Sigmoid colon (tissue), 7 donors: ENCODE measurements at regions of chr5 and their contacts with region 1.

Region 1: DNA sequence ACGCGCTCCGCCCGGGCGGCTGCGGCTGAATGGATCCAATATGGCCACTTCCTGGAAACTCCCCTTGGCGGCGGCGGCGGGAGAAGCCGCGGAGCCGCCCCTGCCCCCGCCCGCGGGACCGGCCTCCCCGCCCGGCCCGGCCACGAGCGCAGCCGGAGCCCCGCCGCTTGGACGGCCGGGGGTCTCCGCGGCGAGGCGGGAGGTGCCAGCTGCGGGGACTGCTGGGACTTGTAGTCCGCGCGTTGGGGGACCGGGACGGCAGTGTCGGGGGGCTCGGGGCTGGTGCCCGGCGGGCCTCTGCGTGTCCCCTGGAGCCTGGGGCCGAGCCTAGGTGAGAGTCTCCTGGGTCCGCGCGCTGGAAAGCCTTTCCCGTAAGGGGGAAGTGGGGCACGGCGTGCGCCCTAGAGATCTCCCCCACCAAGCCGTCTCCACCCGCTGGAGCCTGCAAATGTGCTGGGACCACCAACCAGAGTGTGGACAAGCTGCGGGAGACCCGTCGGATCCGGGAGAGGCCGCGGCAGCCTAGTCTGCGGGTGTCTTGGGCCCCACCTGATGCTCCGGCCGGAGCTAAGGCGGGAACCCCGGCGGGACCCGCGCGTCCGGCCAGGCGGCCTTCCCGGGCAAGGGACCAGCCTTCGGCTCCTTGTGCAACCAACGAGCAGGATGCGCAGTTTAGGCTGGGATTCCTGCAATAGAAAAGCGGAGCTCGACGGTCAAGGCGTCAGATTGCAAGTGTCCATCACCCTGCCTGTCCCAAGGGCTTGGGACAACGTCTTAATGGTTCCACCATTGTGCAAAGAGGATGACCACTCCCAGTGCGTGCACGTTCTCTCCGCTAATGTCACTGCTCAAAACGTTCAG is at the start of gene SEPTIN8:
- DNase-seq: peak; percentile 82
- H3K4me3 ChIP-seq: peak within 1 kb of the TSS; percentile 68 to 79 (median 74)
- H3K27ac ChIP-seq: peak within 1 kb of the TSS; percentile 75 to 82 (median 78)
- H3K4me1 ChIP-seq: peaks cover 0 to 39% (median 29%) of the 10 kb centered on the region in 4 donors
- H3K27me3 ChIP-seq: no peaks in the 10 kb centered on the region
- CTCF ChIP-seq: no peak
- EP300 ChIP-seq: no peak
- POLR2A ChIP-seq: no peak
- total RNA-seq, gene SEPTIN8: 21.4 to 36.0 (median 30.9) TPM

Region 2: DNA sequence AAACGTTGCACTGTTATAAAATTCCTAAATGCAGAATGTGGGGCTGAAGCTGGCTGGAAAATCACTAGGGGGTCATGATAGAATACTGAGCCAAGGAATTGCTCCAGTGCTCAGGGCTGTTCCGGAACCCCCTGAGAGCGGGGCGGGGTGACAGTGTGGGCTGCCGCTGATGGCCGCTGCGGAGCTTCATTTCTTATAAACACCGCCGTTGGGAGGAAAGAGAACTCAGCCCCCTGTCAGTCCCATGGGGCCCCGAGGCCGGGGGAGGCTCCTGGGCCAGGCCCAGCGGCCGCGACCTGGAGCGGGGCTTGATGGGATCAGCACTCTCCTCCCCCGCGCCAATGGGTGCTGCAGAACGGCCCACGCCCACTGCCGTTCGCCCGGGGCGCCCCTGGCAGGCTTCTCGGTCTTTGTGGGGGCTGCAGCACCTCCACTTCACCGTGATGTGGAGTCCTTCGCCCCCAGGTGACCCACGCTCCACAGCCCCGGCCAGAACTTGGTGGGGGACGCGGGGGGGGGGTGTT is 281.7 kb before region 1 on chr5:
- intact Hi-C with region 1: loop called (anchors 5 kb)
- DNase-seq: peak; percentile 94
- H3K4me3 ChIP-seq: peak overlapping the region; percentile 55 to 76 (median 62)
- H3K27ac ChIP-seq: peak overlapping the region; percentile 93 to 100 (median 98)
- H3K4me1 ChIP-seq: peaks cover 0 to 54% (median 44%) of the 10 kb centered on the region in 4 donors
- H3K27me3 ChIP-seq: no peaks in the 10 kb centered on the region
- CTCF ChIP-seq: no peak
- EP300 ChIP-seq: peak in 3 of 4 donors; percentile 3 to 32 (median 23)
- POLR2A ChIP-seq: peak in 1 of 2 donors; percentile 4

Region 3: DNA sequence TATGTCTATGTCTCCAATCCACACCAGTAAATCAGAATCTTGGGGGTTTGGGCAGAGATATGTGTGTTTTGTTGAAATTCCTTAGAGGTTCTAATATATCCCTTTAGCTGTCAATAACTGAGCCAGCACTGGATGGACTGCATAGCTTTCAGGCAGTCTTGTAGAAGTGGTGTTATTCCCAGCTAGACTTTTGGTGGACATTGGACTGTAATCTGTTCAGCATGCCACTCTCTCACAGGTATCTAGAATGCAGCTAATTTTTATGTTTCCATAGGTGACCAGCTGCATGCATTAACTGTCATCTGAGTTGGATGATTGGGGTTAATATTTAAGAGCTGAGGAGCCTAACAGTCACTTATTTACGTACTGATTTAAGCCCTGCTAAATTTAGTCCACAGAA is 164.6 kb before region 1 on chr5:
- intact Hi-C with region 1: no loop called
- DNase-seq: no peak
- H3K4me3 ChIP-seq: no peak overlapping the region
- H3K27ac ChIP-seq: no peak overlapping the region
- H3K4me1 ChIP-seq: no peaks in the 10 kb centered on the region
- H3K27me3 ChIP-seq: no peaks in the 10 kb centered on the region
- CTCF ChIP-seq: no peak
- EP300 ChIP-seq: no peak
- POLR2A ChIP-seq: no peak

Region 4: DNA sequence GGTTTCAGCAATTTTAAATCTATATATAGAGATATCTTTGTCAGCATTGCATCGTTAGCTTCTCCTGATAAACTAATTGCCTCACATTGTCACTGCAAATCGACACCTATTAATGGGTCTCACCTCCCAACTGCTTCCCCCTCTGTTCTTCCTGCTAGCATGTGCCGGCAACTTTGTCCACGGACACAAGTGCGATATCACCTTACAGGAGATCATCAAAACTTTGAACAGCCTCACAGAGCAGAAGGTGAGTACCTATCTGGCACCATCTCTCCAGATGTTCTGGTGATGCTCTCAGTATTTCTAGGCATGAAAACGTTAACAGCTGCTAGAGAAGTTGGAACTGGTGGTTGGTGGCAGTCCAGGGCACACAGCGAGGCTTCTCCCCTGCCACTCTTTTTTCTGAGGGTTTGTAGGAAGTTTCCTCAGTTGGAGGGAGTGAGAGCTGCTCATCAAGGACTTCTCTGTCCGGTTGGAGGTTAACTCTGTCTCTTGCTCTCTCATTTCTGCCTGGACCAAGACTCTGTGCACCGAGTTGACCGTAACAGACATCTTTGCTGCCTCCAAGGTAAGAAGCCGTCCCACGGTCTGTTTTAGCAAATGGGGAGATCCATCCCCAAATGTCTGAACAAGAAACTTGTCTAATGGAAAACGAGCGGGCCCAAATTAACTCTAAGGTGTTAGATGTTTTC is 103.4 kb before region 1 on chr5 and contains the start of gene IL4:
- intact Hi-C with region 1: no loop called
- DNase-seq: no peak
- H3K4me3 ChIP-seq: no peak within 1 kb of the TSS
- H3K27ac ChIP-seq: peak within 1 kb of the TSS; percentile 49 to 80 (median 72)
- H3K4me1 ChIP-seq: peaks cover 0 to 28% (median 24%) of the 10 kb centered on the region in 4 donors
- H3K27me3 ChIP-seq: no peaks in the 10 kb centered on the region
- CTCF ChIP-seq: no peak
- EP300 ChIP-seq: no peak
- POLR2A ChIP-seq: no peak
- total RNA-seq, gene IL4: not detected

Region 5: GRCh38 chr5:132736853-132737833 is 40.3 kb before region 1 on chr5 and contains the start of gene KIF3A:
- intact Hi-C with region 1: loop called (anchors 2 kb)
- DNase-seq: peak; percentile 98
- H3K4me3 ChIP-seq: peak within 1 kb of the TSS; percentile 77 to 94 (median 81)
- H3K27ac ChIP-seq: peak within 1 kb of the TSS; percentile 74 to 85 (median 80)
- H3K4me1 ChIP-seq: peaks cover 0 to 19% (median 10%) of the 10 kb centered on the region in 4 donors
- H3K27me3 ChIP-seq: no peaks in the 10 kb centered on the region
- CTCF ChIP-seq: peak in 2 of 4 experiments; percentile 14 to 30
- EP300 ChIP-seq: no peak
- POLR2A ChIP-seq: no peak
- total RNA-seq, gene KIF3A: 7.1 to 19.9 (median 12.9) TPM

Region 6: DNA sequence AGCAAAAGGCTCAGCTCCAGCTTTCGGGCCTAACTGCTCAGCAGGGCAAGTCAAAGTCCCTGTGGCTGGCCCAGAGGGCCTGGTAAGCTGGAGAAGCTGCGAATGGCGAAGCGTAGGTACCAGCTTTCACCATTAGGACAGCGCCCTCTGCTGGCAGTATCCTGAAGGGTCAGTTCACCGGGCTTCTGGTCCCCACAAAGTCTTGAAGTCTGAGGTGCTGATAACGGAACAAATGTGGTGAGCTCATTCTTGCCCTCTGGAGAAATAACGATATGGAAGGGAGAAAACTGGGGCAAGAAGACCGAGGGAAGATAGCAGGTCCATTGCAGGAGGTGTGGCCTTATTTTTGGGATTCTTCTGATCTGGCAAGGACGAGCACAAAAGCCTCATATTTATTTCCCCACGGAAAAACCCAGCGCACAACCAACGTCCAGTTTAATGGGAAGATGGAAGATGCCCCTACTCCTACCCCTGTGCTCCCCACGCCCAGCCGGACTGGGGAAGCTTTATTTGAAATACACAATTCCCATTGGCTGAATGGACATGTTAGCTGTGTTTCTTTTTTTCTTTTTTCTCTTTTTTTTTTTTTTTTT is 42.8 kb after region 1 on chr5:
- intact Hi-C with region 1: loop called (anchors 5 kb)
- DNase-seq: peak; percentile 94
- H3K4me3 ChIP-seq: no peak overlapping the region
- H3K27ac ChIP-seq: no peak overlapping the region
- H3K4me1 ChIP-seq: peaks cover 0 to 19% (median 11%) of the 10 kb centered on the region in 4 donors
- H3K27me3 ChIP-seq: peaks cover 0 to 17% (median 12%) of the 10 kb centered on the region in 3 donors
- CTCF ChIP-seq: peak; percentile 77 to 93 (median 88)
- EP300 ChIP-seq: no peak
- POLR2A ChIP-seq: no peak

Region 7: GRCh38 chr5:133273661-133274596 is 496.5 kb after region 1 on chr5:
- intact Hi-C with region 1: no loop called
- DNase-seq: no peak
- H3K4me3 ChIP-seq: no peak overlapping the region
- H3K27ac ChIP-seq: no peak overlapping the region
- H3K4me1 ChIP-seq: no peaks in the 10 kb centered on the region
- H3K27me3 ChIP-seq: no peaks in the 10 kb centered on the region
- CTCF ChIP-seq: no peak
- EP300 ChIP-seq: no peak
- POLR2A ChIP-seq: no peak